ENCODE measurements at regions of chr11 and their contacts with region 1.

Region 1: GRCh38 chr11:1837171-1838076 is 1.4 kb upstream of the TNNI2 start:
- DNase-seq: no peak
- H3K4me3 ChIP-seq: no peak overlapping the region
- H3K27ac ChIP-seq: no peak overlapping the region
- H3K4me1 ChIP-seq: peaks cover 5% of the 10 kb centered on the region
- H3K27me3 ChIP-seq: no peaks in the 10 kb centered on the region
- CTCF ChIP-seq: peak; percentile 54 to 84 (median 64)
- POLR2A ChIP-seq: no peak

Region 2: GRCh38 chr11:1882519-1883238 is 45.3 kb after region 1 on chr11:
- intact Hi-C with region 1: loop called (anchors 5 kb)
- DNase-seq: peak; percentile 63
- H3K4me3 ChIP-seq: no peak overlapping the region
- H3K27ac ChIP-seq: no peak overlapping the region
- H3K4me1 ChIP-seq: no peaks in the 10 kb centered on the region
- H3K27me3 ChIP-seq: no peaks in the 10 kb centered on the region
- CTCF ChIP-seq: peak; percentile 77 to 92 (median 89)
- POLR2A ChIP-seq: no peak

Region 3: GRCh38 chr11:2444821-2445745 is 607.7 kb after region 1 on chr11 and contains the start of gene KCNQ1:
- intact Hi-C with region 1: no loop called
- DNase-seq: peak; percentile 34
- H3K4me3 ChIP-seq: peak within 1 kb of the TSS; percentile 34 to 41
- H3K27ac ChIP-seq: no peak within 1 kb of the TSS
- H3K4me1 ChIP-seq: no peaks in the 10 kb centered on the region
- H3K27me3 ChIP-seq: no peaks in the 10 kb centered on the region
- CTCF ChIP-seq: peak in 1 of 4 experiments; percentile 38
- POLR2A ChIP-seq: peak; percentile 71
- total RNA-seq, gene KCNQ1: 10.0 to 33.8 TPM